ENCODE measurements at regions of chr3 and their contacts with region 1.

Region 1: DNA sequence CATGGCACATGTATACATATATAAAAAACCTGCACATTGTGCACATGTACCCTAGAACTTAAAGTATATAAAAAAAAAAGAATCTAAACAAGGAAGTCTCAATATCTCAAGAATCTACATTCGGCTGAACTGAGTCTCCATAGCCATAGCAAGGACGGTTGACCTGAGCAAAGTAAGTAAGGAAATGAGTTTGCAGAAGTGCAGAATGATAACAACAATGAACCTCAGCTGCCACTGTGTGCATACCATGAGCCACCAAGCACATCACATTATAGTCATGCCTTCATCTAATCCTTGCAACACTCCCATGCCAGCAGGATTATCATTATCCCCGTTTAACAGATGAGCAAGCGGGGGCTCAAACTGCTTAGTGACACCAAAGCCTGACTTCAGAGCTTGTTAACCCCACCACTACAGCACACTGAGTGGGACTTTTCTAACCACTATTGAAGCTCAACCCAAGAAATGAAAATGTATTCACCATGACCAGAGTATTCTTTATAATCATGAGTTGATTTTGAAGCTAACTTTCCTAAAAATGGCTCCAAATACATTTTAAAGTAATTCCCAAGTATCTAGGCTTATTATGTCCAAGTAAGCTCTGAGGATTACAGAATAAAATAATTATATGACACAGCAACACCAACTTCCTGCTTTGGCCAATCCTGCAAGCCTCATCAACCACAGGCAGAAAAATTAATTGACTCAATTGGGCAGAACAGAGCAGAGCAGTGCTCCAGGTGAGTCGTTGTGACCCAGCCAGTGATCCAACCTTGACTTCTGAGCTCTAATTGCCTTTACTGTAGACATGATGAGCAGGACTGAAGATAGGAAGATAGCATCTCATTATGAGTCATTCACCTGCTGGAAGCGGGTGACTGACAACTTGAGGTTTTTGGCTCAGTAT is 47.3 kb upstream of the IL12A start:
- DNase-seq: peak; percentile 43 to 77
- H3K4me3 ChIP-seq: no peak overlapping the region
- H3K27ac ChIP-seq: no peak overlapping the region
- H3K4me1 ChIP-seq: peaks cover 13% of the 10 kb centered on the region
- H3K27me3 ChIP-seq: no peaks in the 10 kb centered on the region
- CTCF ChIP-seq: no peak

Region 2: DNA sequence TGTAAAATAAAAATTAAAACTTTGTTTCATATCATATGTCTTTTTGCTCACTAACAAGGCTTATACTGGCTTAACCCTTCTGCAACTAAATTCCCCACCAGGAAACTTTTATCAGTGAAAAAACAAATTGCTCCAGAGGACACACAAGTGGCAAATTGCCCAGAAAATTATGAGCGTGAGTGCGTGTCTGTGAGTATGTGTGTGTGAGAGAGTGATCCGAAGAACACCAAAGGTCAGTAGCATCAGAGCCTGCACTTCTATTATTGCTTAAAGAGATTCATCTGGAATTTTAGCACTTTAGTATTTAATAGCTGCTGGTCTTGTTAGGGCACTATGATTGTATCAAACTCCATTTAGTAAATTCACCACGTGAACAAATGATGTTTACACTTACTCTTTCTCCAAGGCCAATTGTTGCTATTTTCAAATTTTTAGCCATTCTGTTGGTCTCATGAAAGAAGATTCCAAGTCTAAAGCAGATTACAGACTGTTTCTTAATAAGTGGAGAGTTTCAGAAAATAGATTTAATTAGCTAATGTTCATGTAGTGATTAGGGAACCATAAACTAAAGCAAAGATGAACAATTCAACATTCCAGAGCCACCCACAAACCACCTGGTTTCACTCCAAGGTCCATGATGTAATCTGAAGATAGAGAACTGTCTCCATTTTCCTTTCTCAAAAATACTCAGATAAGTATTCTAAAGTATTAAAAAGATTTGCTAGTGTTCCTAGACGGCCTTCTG is 43.8 kb before region 1 on chr3:
- CTCF ChIA-PET with region 1: no interaction called
- POLR2A ChIA-PET with region 1: interaction called, 10 read pairs
- intact Hi-C with region 1: no loop called
- DNase-seq: no peak
- H3K4me3 ChIP-seq: no peak overlapping the region
- H3K27ac ChIP-seq: no peak overlapping the region
- H3K4me1 ChIP-seq: no peaks in the 10 kb centered on the region
- H3K27me3 ChIP-seq: no peaks in the 10 kb centered on the region
- CTCF ChIP-seq: no peak

Region 3: GRCh38 chr3:159929435-159930141 is 11.7 kb before region 1 on chr3:
- CTCF ChIA-PET with region 1: interaction called, 12 read pairs
- POLR2A ChIA-PET with region 1: interaction called, 4 read pairs
- intact Hi-C with region 1: no loop called
- DNase-seq: peak; percentile 51 to 93
- H3K4me3 ChIP-seq: peak overlapping the region; percentile 27; the same call in 1 of the 2 replicates
- H3K27ac ChIP-seq: peak overlapping the region; percentile 94
- H3K4me1 ChIP-seq: peaks cover 46% of the 10 kb centered on the region
- H3K27me3 ChIP-seq: no peaks in the 10 kb centered on the region
- CTCF ChIP-seq: peak; percentile 62

Region 4: GRCh38 chr3:159988617-159989271 is 47.5 kb after region 1 on chr3 and contains the start of gene IL12A:
- CTCF ChIA-PET with region 1: interaction called, 4 read pairs
- POLR2A ChIA-PET with region 1: no interaction called
- intact Hi-C with region 1: loop called (anchors 5 kb)
- DNase-seq: peak; percentile 58 to 79
- H3K4me3 ChIP-seq: peak within 1 kb of the TSS; percentile 96
- H3K27ac ChIP-seq: no peak within 1 kb of the TSS
- H3K4me1 ChIP-seq: peaks cover 23% of the 10 kb centered on the region
- H3K27me3 ChIP-seq: no peaks in the 10 kb centered on the region
- CTCF ChIP-seq: peak; percentile 98
- total RNA-seq, gene IL12A: 0.28 and 0.40 TPM in 2 replicates

Region 5: DNA sequence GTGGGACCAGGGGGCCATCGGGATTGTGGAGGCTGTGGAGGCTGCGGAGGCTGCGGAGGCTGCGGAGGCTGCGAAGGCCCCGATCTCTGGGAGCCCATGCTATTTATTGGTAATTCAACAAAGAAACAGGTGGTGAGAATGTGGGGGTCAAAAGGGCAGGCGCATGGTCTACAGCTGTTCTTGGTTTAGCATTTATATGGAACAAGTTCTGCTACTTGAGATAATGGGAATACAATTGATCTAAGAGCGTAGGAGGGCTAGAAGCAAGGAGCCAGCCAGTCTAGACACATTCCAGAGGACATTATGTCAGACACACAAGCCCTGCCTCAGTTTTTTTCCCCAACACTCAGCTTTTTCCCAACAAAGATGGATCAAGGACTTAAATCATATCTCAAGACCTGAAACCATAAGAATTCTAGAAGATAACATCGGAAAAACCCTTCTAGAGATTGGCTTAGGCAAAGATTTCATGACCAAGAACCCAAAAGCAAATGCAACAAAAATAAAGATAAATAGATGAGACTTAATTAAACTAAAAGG is 304.0 kb after region 1 on chr3:
- CTCF ChIA-PET with region 1: no interaction called
- POLR2A ChIA-PET with region 1: no interaction called
- intact Hi-C with region 1: no loop called
- DNase-seq: no peak
- H3K4me3 ChIP-seq: no peak overlapping the region
- H3K27ac ChIP-seq: no peak overlapping the region
- H3K4me1 ChIP-seq: no peaks in the 10 kb centered on the region
- H3K27me3 ChIP-seq: no peaks in the 10 kb centered on the region
- CTCF ChIP-seq: no peak

Measured in PC-9 (cell line).